Sigmoid colon (tissue), 7 donors: ENCODE measurements at regions of chr11 and their contacts with region 1.

Region 1: GRCh38 chr11:14148653-14149273 is 186.2 kb downstream of the SPON1 start:
- DNase-seq: no peak
- H3K4me3 ChIP-seq: no peak overlapping the region
- H3K27ac ChIP-seq: no peak overlapping the region
- H3K4me1 ChIP-seq: no peaks in the 10 kb centered on the region
- H3K27me3 ChIP-seq: no peaks in the 10 kb centered on the region
- CTCF ChIP-seq: peak in 2 of 4 experiments; percentile 53 to 61
- EP300 ChIP-seq: no peak
- POLR2A ChIP-seq: no peak

Region 2: GRCh38 chr11:13955971-13956421 is 192.8 kb before region 1 on chr11:
- intact Hi-C with region 1: loop called (anchors 1 kb)
- DNase-seq: peak; percentile 83
- H3K4me3 ChIP-seq: no peak overlapping the region
- H3K27ac ChIP-seq: no peak overlapping the region
- H3K4me1 ChIP-seq: peaks cover 0 to 3% (median 0%) of the 10 kb centered on the region in 4 donors
- H3K27me3 ChIP-seq: peaks cover 0 to 17% (median 7%) of the 10 kb centered on the region in 3 donors
- CTCF ChIP-seq: peak; percentile 79 to 93 (median 89)
- EP300 ChIP-seq: no peak
- POLR2A ChIP-seq: no peak

Region 3: DNA sequence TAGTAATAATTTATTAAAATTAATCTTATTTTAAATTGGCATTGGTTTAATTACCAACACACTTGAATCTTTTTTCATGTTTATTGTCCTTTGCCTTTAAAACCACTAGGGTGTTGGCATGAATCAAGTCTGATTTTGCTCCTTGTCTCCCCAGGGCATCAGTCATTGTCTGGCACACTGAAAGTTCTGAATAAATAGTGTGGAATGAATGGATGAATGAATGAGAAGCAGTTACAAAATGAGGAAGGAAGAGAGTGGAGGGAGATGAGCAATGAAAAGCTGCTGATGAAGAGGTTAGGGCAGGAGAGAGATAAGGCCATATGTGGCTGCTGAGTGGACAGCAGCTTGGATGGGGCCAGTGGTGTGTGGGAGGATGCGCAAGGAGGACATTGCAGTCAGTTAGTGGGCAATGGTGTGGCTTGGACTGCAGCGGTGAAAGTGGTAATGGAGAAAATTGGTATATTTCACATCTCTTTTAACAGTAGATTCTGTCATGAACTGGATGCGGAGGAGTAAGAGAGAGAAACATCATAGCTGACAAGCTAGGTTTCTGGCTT is 54.2 kb before region 1 on chr11:
- intact Hi-C with region 1: no loop called
- DNase-seq: no peak
- H3K4me3 ChIP-seq: no peak overlapping the region
- H3K27ac ChIP-seq: no peak overlapping the region
- H3K4me1 ChIP-seq: no peaks in the 10 kb centered on the region
- H3K27me3 ChIP-seq: peaks cover 0 to 7% (median 0%) of the 10 kb centered on the region in 3 donors
- CTCF ChIP-seq: no peak
- EP300 ChIP-seq: no peak
- POLR2A ChIP-seq: no peak